GM18951 (cell line): ENCODE measurements at regions of chr1 and their contacts with region 1.

Region 1: GRCh38 chr1:111227851-111228747 is 586 bp downstream of the CHI3L2 start:
- POLR2A ChIP-seq: no peak

Region 2: DNA sequence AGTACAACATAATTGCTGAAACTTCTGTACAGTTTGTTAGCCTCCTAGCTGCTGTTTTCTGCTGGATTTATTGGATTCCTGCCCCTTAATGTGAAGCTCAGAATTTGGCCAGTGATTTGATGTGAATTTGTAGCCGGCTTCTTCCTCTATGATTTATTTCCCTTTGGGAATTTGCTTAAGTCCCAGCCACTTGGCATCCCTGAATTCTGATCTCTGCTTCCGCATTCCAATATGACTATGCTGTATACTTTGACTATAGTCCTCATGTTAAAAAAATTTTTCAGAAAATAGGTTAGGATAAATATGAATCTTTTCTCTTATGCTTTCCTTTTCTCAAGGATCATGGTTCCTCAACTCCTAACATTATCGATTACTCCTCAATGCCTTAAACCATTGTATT is 252.0 kb before region 1 on chr1:
- in situ Hi-C with region 1: no loop called
- POLR2A ChIP-seq: no peak

Region 3: GRCh38 chr1:111334169-111334568 is 106.1 kb after region 1 on chr1:
- in situ Hi-C with region 1: loop called (anchors 5 kb)
- POLR2A ChIP-seq: no peak

Region 4: DNA sequence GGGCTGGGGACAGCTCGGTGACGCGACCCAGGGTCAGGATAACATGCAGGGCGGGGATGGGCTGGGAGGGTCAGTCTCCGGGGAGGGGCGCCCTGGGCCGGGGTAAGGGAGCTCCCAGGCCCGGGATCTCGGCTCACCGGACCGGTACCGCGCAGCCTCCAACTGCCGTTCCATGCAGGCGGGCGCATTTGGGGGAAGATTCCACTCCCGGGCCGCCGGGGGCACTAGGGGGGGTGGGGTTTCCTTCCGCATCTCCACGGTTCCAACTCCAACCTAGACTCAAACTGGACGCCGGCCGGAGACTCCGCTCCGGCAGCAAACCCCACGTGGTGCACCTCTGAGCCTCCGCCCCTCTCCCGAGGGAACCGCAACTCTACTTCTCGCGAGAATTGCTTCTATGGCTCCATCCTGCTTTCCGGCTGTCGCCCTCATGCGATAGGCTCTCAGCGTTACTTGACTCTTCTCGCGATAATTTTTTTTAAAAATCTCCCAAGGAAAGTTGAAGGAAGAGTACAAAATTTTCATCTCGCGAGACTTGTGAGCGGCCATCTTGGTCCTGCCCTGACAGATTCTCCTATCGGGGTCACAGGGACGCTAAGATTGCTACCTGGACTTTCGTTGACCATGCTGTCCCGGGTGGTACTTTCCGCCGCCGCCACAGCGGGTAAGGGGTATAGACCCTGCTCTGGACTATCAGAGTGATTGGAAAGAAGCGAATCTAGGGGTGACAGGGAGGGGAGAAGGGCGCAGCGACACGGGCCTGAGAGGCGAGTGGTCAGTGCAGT is 221.0 kb after region 1 on chr1 and contains the starts of genes ATP5PB and WDR77:
- in situ Hi-C with region 1: no loop called
- POLR2A ChIP-seq: peak; percentile 64